PC-9 (cell line): ENCODE measurements at regions of chr10 and their contacts with region 1.

Region 1: DNA sequence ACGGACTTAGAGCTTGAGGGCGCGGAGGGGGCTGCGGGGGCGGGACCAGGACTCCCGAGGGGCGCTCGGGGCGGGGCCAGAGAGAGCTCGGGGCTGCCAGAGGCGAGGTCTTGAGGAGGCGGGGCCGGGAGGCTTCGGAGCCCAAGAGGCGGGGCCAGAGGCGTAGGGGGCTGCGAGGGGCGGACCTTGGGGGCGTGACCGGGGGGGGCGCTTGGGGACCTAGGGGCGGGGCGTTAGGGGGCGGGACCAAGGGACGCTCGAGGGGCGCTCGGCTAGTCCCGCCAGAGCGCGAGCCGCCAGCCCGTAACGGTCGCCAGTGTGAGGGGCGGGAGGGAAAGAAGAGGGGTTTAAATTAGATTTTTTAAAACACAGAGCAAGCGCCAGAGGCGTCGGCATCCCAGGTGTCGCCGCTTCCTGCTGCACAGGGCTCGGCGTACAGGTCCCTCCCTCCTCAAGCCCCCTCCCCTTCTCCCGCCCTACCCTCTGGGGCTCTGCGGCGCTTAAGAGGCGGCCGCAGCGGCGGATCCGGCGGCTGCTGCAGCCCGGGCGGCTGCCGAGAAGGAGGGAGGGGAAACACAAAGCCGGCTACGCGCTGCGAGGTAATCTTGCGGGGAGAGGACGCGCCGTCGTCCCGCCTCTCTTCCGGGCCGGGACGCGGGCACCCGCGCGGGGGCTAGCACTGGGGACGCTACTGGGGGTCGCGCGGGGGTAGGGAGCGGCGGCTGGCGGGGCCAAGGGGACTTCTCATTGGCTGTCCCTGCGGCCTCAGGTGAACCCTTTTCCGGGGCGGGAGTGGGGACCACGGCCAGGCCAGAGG is at the start of gene ADD3:
- DNase-seq: peak; percentile 49 to 79
- H3K4me3 ChIP-seq: peak within 1 kb of the TSS; percentile 91
- H3K27ac ChIP-seq: no peak within 1 kb of the TSS
- H3K4me1 ChIP-seq: peaks cover 36% of the 10 kb centered on the region
- H3K27me3 ChIP-seq: no peaks in the 10 kb centered on the region
- CTCF ChIP-seq: no peak
- total RNA-seq, gene ADD3: 61.7 and 77.7 TPM in 2 replicates

Region 2: GRCh38 chr10:109914966-109915365 is 92.9 kb before region 1 on chr10:
- CTCF ChIA-PET with region 1: no interaction called
- POLR2A ChIA-PET with region 1: no interaction called
- intact Hi-C with region 1: loop called (anchors 5 kb)
- DNase-seq: peak; percentile 29 to 92
- H3K4me3 ChIP-seq: peak overlapping the region; percentile 21; the same call in 1 of the 2 replicates
- H3K27ac ChIP-seq: peak overlapping the region; percentile 73
- H3K4me1 ChIP-seq: peaks cover 42% of the 10 kb centered on the region
- H3K27me3 ChIP-seq: no peaks in the 10 kb centered on the region
- CTCF ChIP-seq: no peak

Region 3: DNA sequence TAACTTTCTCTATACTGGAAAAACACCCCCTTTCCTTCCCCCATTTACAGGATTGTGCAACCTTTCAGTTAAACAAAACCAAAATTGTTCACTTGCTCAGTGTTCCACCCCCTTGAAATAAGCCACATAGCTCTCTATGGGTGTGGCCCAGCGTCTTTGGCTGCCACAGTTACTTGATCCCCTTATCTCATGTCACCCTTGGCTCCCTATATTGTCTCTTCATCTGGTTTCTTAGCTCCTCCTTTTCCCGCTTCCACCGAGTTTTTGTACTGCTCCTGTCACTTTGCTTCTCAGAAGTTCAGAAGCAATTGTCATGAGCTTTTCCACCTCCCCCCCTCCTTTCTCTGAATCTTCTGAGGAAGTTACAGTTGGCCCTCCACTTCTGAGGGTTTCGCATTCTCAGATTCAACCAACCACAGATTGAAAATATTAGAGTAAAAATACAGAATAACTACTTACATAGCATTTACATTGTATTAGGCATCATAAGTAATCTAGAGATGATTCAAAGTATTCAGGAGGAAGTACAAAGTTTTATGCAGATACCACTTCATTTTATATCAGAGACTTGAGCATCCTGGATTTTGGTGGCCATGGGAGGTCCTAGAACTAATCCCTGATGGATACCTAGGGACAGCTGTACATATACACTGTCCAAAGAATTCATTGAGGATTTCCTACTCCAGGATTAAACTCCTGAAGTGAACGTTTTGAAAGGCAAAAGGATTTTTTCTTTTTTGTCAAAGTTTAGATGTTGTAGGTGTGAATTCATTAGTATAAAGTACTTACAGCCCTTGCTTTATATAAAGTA is 60.3 kb after region 1 on chr10:
- CTCF ChIA-PET with region 1: no interaction called
- POLR2A ChIA-PET with region 1: no interaction called
- intact Hi-C with region 1: loop called (anchors 2 kb)
- DNase-seq: peak in 1 of 2 experiments; percentile 36
- H3K4me3 ChIP-seq: no peak overlapping the region
- H3K27ac ChIP-seq: no peak overlapping the region
- H3K4me1 ChIP-seq: 0 out of 2 replicates have a peak, but pooled peaks cover 11% of the 10 kb centered on the region
- H3K27me3 ChIP-seq: no peaks in the 10 kb centered on the region
- CTCF ChIP-seq: no peak